Activated CD4-positive, alpha-beta memory T cell treated with anti-CD3 and anti-CD28 coated beads, Interleukin-2, amount 10 ng/mL, durations not matched to agents 7 days and 5 days (primary cell): ENCODE measurements at regions of chr17 and their contacts with region 1.

Region 1: GRCh38 chr17:30906101-30906911 is at the start of gene TEFM:
- DNase-seq: peak; percentile 92
- H3K4me3 Mint-ChIP-seq: peak within 1 kb of the TSS; percentile 94
- H3K27ac Mint-ChIP-seq: peak within 1 kb of the TSS; percentile 77
- H3K4me1 Mint-ChIP-seq: peaks cover 50% of the 10 kb centered on the region
- H3K27me3 Mint-ChIP-seq: no peaks in the 10 kb centered on the region
- total RNA-seq, gene TEFM: 14.3 to 14.9 TPM

Region 2: GRCh38 chr17:30894236-30894635 is 12.1 kb before region 1 on chr17:
- CTCF ChIA-PET with region 1: no interaction called
- POLR2A ChIA-PET with region 1: interaction called, 12 read pairs
- DNase-seq: no peak
- H3K4me3 Mint-ChIP-seq: no peak overlapping the region
- H3K27ac Mint-ChIP-seq: no peak overlapping the region
- H3K4me1 Mint-ChIP-seq: no peaks in the 10 kb centered on the region
- H3K27me3 Mint-ChIP-seq: no peaks in the 10 kb centered on the region

Region 3: DNA sequence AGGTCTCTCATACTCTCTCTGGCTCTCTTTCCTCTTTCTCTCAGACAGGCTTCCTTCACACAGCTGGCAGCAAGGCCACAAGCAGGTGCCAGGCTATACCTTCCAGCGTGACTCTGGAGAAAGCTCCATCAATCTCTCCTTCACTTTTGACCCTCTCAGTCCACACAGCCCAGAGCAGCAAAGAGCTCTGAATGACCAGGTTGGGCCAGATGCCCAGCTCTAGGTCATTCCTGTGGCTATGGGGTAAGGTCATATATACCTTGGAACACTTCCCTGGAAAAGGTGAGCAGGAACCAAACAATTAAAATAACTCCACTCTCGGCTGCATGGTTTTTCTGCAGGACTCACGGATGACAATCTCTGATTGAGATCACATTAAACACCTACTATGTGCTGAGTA is 24.2 kb after region 1 on chr17:
- CTCF ChIA-PET with region 1: no interaction called
- POLR2A ChIA-PET with region 1: no interaction called
- DNase-seq: no peak
- H3K4me3 Mint-ChIP-seq: no peak overlapping the region
- H3K27ac Mint-ChIP-seq: no peak overlapping the region
- H3K4me1 Mint-ChIP-seq: no peaks in the 10 kb centered on the region
- H3K27me3 Mint-ChIP-seq: peaks cover 8% of the 10 kb centered on the region

Region 4: DNA sequence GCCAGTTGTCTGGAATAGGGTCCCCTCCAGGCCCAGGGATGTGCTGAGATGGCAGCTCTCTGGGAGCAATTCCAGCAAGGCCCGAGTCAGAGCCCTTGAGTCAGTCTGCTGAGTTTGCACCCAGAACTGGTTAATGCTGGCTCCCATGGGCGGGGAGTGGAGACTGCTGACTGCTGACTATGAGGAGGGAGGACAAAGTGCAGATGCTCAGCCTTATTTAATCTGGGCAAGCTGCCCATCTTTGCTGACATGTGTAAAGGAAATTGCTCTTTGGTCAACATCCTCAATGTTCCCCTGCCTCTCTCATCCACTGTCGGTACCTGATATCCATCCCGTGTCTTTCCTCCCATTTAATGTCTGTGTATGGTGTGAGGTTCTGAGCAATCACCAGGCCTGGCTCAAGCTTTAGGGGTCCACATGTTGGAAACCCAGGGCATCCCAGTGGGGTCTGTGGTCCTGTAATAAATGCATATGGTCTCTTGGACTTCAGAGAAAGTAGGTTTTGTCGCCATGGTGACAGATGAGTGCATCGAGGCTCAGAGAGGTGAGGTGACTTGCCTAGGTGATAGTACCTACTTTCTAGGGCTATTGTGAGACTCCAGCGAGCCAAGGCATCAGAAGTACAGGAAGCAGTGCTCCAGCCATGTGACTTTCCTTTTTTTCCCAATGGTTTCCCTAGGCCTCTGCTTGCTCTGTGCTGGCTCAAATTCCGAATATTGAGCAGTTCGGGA is 44.5 kb after region 1 on chr17:
- CTCF ChIA-PET with region 1: no interaction called
- POLR2A ChIA-PET with region 1: no interaction called
- DNase-seq: no peak
- H3K4me3 Mint-ChIP-seq: no peak overlapping the region
- H3K27ac Mint-ChIP-seq: no peak overlapping the region
- H3K4me1 Mint-ChIP-seq: no peaks in the 10 kb centered on the region
- H3K27me3 Mint-ChIP-seq: no peaks in the 10 kb centered on the region